HCT116 (cell line): ENCODE measurements at regions of chr15 and their contacts with region 1.

Region 1: DNA sequence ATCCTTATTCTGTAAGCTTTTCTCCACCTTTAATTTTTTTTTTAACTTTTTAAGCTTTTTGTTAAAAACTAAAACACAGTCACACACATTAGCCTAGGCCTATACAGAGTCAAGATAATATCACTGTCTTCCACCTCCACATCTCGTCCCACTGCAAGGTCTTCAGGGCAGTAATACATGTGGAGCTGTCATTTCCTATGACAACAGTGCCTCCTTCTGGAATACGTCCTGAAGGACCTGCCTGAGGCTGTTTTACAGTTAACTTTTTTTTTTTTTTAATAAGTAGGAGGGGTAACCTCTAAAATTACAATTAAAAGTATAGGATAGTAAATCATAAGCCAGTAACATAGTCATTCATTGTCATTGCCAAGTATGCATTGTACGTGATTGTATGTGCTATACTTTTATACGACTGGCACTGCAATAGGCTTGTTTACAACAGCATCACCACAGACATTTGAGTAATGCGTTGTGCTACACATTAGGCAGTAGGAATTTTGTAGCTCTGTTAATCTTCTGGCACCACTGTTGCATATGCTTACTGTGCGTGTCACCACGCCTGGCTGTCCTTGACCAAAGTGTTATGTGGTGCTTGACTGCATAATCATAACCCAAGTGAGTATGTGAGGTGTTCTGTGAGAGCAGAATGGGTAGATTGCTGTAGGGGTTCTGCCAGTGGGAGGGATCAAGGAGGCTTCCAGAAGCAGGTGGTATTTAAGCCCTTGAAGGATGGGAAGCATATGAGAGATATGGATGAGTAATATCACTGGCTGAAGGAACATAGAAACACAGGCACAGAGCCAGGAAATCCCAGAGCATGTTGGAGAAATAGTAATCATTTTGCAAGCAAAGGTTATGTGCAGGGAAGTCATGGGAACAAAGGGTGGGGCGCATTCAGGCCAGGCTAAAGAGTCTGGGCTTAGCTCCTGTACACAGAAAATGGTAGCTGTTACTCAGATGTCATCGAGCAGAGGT is 18.3 kb downstream of the FBXO22 start:
- DNase-seq: peak; percentile 48
- ATAC-seq: peak; percentile 93
- H3K4me3 ChIP-seq: no peak overlapping the region
- H3K27ac ChIP-seq: no peak overlapping the region
- H3K4me1 ChIP-seq: no peaks in the 10 kb centered on the region
- H3K27me3 ChIP-seq: no peaks in the 10 kb centered on the region
- CTCF ChIP-seq: peak; percentile 51 to 74 (median 68); a peak in 4 of 6 replicates
- POLR2A ChIP-seq: no peak
- RAD21 ChIP-seq: peak; percentile 78

Region 2: DNA sequence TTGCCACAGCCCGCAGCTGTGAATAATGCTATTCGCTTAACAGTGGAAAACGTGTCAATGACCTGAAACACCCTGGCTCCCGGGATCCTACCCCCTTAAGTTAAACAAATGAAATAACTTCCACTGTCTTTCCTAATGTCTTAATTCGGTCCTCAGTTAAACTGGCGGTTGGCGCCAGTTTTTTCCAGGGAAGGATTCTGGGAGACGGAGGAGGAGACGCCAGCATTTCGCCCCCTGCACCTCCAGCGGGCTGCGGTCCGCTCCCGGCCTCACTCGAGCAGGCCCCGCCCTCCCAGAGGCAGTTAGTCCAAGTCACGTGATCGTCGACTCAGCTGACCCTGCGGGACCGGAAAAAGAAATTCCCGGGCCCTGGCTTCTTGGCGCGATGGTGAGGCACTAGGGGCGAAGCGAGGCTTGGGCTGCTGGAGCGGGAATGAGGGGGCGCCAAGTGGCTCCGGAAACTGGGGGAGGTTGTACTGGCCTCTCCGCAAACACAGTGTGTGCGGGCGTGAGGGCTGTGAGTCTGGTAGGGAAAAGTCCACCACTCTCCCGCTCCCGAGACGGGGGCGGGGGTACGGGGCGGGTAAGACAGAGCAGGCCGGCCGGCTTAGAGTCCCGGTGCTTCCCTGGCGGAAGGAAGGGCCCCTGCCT is 586.2 kb before region 1 on chr15 and contains the start of gene COMMD4:
- CTCF ChIA-PET with region 1: no interaction called
- POLR2A ChIA-PET with region 1: no interaction called
- RAD21 ChIA-PET with region 1: no interaction called
- intact Hi-C with region 1: no loop called
- DNase-seq: peak; percentile 91
- ATAC-seq: peak; percentile 93
- H3K4me3 ChIP-seq: peak within 1 kb of the TSS; percentile 71 to 83
- H3K27ac ChIP-seq: peak within 1 kb of the TSS; percentile 48
- H3K4me1 ChIP-seq: peaks cover 9 to 14% of the 10 kb centered on the region in 2 experiments
- H3K27me3 ChIP-seq: no peaks in the 10 kb centered on the region
- CTCF ChIP-seq: no peak
- POLR2A ChIP-seq: no peak
- RAD21 ChIP-seq: no peak
- total RNA-seq, gene COMMD4: 141 TPM

Region 3: GRCh38 chr15:75732809-75733451 is 189.1 kb before region 1 on chr15:
- CTCF ChIA-PET with region 1: no interaction called
- POLR2A ChIA-PET with region 1: no interaction called
- RAD21 ChIA-PET with region 1: no interaction called
- intact Hi-C with region 1: loop called (anchors 5 kb)
- DNase-seq: peak; percentile 39
- ATAC-seq: peak; percentile 79
- H3K4me3 ChIP-seq: no peak overlapping the region
- H3K27ac ChIP-seq: no peak overlapping the region
- H3K4me1 ChIP-seq: peaks cover 2 to 10% of the 10 kb centered on the region in 2 experiments; a peak in 2 of 4 replicates
- H3K27me3 ChIP-seq: no peaks in the 10 kb centered on the region
- CTCF ChIP-seq: peak; percentile 61 to 81 (median 67)
- POLR2A ChIP-seq: no peak
- RAD21 ChIP-seq: peak; percentile 49

Region 4: GRCh38 chr15:76127880-76128279 is 205.9 kb after region 1 on chr15:
- CTCF ChIA-PET with region 1: no interaction called
- POLR2A ChIA-PET with region 1: no interaction called
- RAD21 ChIA-PET with region 1: no interaction called
- intact Hi-C with region 1: no loop called
- DNase-seq: no peak
- ATAC-seq: no peak
- H3K4me3 ChIP-seq: no peak overlapping the region
- H3K27ac ChIP-seq: no peak overlapping the region
- H3K4me1 ChIP-seq: no peaks in the 10 kb centered on the region
- H3K27me3 ChIP-seq: peaks cover 4% of the 10 kb centered on the region; the same call in 1 of the 2 replicates
- CTCF ChIP-seq: no peak
- POLR2A ChIP-seq: no peak
- RAD21 ChIP-seq: no peak